Mammary epithelial cell (primary cell): ENCODE measurements at regions of chr7 and their contacts with region 1.

Region 1: DNA sequence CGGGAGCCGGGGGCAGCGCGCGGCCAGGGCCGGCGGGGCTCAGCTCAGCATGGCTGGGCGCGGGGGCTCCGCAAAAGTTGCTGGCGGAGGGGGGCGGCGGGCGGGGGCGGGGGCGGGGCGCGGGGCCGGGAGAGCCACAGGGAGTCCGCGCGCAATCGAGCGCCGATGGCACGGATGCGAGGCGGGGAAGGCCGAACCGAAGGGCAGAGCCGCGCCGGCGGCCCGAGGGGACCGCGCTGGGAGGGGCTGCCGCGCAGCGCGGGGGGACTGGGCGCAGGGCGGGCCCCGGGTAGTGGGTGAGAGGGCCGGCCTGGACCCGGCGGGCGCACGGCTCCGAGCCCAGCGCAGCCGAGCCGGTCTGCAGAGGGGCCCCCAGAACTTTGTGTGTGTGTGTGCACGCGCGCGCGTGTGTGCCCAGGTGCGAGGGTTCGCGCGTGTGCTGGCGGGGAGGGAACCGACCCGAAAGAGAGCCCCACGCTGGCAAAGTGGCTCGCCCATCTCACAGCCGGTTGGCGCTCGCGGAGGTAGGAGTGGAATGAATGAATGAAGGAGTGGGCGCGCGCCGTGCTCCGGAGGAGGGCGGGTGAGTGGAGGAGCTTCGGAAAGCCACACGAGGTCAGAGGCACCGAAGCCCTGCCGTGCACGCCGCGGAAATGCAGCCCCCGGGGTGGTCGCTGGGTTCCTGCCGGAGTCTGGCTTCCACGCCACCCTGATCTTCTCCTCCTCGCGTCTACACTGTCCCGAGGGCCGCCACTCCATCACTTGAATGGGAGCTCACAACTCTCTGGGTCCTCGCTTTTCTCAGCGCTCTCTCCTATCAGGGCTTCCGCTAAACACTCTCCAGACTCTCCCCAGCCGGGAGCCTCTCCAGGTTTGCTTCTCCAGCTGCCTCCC is at the start of gene HIPK2:
- DNase-seq: peak; percentile 55
- H3K4me3 ChIP-seq: peak within 1 kb of the TSS; percentile 67 to 75 (median 71)
- H3K27ac ChIP-seq: peak within 1 kb of the TSS; percentile 78
- H3K4me1 ChIP-seq: peaks cover 33% of the 10 kb centered on the region
- H3K27me3 ChIP-seq: no peaks in the 10 kb centered on the region
- CTCF ChIP-seq: no peak
- total RNA-seq, gene HIPK2: 31.0 to 58.3 TPM

Region 2: DNA sequence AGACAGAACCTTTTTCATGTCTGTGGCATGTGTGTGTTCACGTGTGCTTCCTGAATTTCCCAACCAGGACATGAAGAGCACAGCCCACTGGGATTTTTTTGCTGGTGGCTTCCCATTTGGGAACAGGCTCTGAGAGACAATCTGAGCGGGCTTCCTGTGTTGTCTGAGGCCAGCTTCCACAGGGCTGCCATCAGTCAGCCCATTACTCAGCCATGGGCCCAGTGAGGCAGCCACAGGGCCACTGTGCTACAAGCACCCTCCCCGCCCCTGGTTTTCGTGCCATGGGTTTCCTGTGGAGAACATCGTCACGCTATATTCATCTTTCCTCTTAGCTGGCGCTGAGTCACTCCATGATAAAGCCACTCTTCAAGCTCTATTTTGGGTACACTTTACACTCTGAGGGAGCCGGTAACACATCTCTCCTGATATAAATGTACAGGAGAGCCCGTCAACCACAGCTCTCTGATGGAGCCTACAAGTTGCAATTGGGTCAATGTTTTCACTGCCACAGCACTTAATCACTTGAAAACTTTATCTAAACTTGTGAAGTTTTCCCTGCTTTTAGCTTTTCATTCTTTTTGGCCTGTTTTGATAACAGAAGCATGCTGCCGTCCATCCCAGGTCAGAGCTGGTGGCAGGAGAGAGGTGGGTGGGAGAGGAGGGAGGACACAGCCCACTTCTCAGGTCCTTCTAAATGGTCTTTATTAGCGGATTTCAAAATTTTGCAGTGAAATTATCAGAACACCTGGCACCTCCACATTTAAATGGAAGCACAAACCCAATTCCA is 97.3 kb before region 1 on chr7:
- CTCF ChIA-PET with region 1: no interaction called
- dilution Hi-C with region 1: no loop called
- in situ Hi-C with region 1: no loop called
- intact Hi-C with region 1: loop called (anchors 1 kb)
- DNase-seq: peak; percentile 97
- H3K4me3 ChIP-seq: no peak overlapping the region
- H3K27ac ChIP-seq: peak overlapping the region; percentile 97
- H3K4me1 ChIP-seq: peaks cover 49% of the 10 kb centered on the region
- H3K27me3 ChIP-seq: no peaks in the 10 kb centered on the region
- CTCF ChIP-seq: no peak

Region 3: GRCh38 chr7:139825666-139826290 is 47.6 kb after region 1 on chr7:
- CTCF ChIA-PET with region 1: no interaction called
- dilution Hi-C with region 1: no loop called
- in situ Hi-C with region 1: no loop called
- intact Hi-C with region 1: loop called (anchors 2 kb)
- DNase-seq: peak; percentile 49
- H3K4me3 ChIP-seq: no peak overlapping the region
- H3K27ac ChIP-seq: no peak overlapping the region
- H3K4me1 ChIP-seq: peaks cover 8% of the 10 kb centered on the region
- H3K27me3 ChIP-seq: no peaks in the 10 kb centered on the region
- CTCF ChIP-seq: no peak

Region 4: GRCh38 chr7:139889186-139889871 is 111.1 kb after region 1 on chr7:
- CTCF ChIA-PET with region 1: no interaction called
- dilution Hi-C with region 1: no loop called
- in situ Hi-C with region 1: no loop called
- intact Hi-C with region 1: loop called (anchors 5 kb)
- DNase-seq: peak; percentile 65
- H3K4me3 ChIP-seq: no peak overlapping the region
- H3K27ac ChIP-seq: peak overlapping the region; percentile 30
- H3K4me1 ChIP-seq: peaks cover 25% of the 10 kb centered on the region
- H3K27me3 ChIP-seq: no peaks in the 10 kb centered on the region
- CTCF ChIP-seq: no peak

Region 5: GRCh38 chr7:139915864-139916716 is 137.9 kb after region 1 on chr7:
- CTCF ChIA-PET with region 1: no interaction called
- dilution Hi-C with region 1: no loop called
- in situ Hi-C with region 1: no loop called
- intact Hi-C with region 1: loop called (anchors 2 kb)
- DNase-seq: peak; percentile 98
- H3K4me3 ChIP-seq: no peak overlapping the region
- H3K27ac ChIP-seq: peak overlapping the region; percentile 69
- H3K4me1 ChIP-seq: peaks cover 29% of the 10 kb centered on the region
- H3K27me3 ChIP-seq: no peaks in the 10 kb centered on the region
- CTCF ChIP-seq: no peak

Region 6: DNA sequence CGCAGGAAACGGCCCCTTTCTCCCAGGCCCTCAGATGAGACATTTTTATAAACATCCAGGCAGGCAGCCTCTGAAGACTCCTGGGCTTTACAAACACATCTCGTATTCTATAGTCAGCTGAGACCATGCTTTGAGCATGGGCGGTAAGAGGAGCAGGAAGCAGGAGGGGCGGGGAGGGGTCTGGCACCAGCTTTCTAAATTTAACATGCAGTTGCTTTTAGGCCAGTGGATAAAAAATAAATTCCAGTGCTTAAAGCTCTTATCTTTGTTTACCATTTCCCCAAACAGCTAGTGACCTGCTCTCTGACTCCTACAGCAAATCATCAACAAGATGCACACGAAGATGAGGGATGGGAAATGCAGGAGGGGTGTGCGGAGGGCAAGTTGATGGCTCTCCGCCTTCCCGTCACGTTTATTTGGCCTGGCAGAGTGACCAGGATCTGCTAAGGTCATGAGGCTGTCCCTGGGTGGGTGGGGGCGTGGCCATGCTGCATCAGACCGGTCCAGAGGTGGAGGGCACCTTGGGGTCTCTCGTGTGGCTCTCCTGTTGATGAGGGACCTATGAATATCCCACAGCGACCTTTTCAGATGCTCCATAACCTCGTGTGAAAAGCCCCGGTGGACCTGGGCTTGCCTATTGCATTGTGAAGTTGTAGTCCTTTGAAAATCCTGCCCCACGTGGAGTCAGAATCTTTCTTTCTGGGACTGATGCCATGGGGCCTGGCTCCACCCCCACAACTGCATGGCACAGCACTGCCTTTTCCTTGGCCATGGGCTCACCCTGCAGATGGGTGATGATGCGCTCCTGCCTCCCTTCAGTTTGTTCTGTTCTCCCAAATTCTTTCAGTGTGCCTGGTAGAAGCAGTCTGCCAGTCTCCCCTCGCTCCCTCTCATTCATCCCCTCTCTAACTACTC is 217.1 kb after region 1 on chr7:
- CTCF ChIA-PET with region 1: no interaction called
- dilution Hi-C with region 1: no loop called
- in situ Hi-C with region 1: loop called in 1 of 2 experiments (anchors 25 kb)
- intact Hi-C with region 1: no loop called
- DNase-seq: no peak
- H3K4me3 ChIP-seq: no peak overlapping the region
- H3K27ac ChIP-seq: no peak overlapping the region
- H3K4me1 ChIP-seq: no peaks in the 10 kb centered on the region
- H3K27me3 ChIP-seq: no peaks in the 10 kb centered on the region
- CTCF ChIP-seq: peak in 1 of 2 donors; percentile 21

Region 7: GRCh38 chr7:140326116-140326928 is 548.1 kb after region 1 on chr7:
- CTCF ChIA-PET with region 1: no interaction called
- dilution Hi-C with region 1: no loop called
- in situ Hi-C with region 1: no loop called
- intact Hi-C with region 1: loop called (anchors 10 kb)
- DNase-seq: peak; percentile 46
- H3K4me3 ChIP-seq: no peak overlapping the region
- H3K27ac ChIP-seq: no peak overlapping the region
- H3K4me1 ChIP-seq: no peaks in the 10 kb centered on the region
- H3K27me3 ChIP-seq: no peaks in the 10 kb centered on the region
- CTCF ChIP-seq: peak; percentile 58 to 89